ENCODE measurements at regions of chr11 and their contacts with region 1.

Region 1: DNA sequence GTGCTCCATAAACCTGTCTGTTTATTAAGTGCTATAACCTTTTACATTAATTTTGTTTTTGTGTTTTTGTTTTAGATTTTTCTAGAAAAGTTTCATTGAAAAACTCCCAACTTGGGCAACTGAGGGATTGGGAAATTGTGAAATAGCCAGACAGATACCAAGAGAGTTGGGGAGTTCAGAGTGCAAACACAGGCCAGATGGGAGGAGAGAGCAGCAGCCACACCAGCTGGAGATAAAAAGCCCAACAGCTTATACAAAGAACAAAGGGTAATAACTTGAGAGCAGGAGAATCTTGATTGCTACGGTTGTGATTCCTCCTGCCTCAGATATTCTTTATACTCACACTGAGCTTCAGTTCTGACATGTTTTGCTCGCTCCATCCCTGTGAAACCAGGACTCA is 1642.2 kb downstream of the LRRC4C start:
- DNase-seq: no peak
- H3K4me3 ChIP-seq: no peak overlapping the region
- H3K27ac ChIP-seq: no peak overlapping the region
- H3K4me1 ChIP-seq: no peaks in the 10 kb centered on the region
- H3K27me3 ChIP-seq: no peaks in the 10 kb centered on the region
- CTCF ChIP-seq: no peak
- POLR2A ChIP-seq: no peak

Region 2: DNA sequence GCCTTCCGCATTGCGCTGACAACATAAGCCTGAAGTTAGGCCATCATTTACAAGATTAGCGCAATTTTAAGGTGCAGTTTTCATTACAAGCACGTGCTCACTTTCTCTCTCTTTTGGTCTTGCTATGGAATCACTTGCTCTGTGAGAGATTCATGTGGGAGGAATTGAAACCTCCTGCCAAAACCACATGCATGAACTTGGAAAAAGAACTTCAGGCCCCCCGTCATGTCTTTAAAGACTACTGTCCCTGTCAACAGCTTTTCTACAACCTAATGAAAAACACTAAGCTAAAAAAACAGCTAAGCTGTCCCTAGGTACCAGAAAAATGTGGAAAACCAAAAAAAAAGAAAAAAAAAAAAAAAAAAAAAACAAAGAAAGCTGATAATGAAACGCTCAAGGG is 1511.6 kb before region 1 on chr11:
- intact Hi-C with region 1: no loop called
- DNase-seq: no peak
- H3K4me3 ChIP-seq: no peak overlapping the region
- H3K27ac ChIP-seq: no peak overlapping the region
- H3K4me1 ChIP-seq: no peaks in the 10 kb centered on the region
- H3K27me3 ChIP-seq: no peaks in the 10 kb centered on the region
- CTCF ChIP-seq: no peak
- POLR2A ChIP-seq: no peak

Region 3: GRCh38 chr11:39784873-39785272 is 32.4 kb before region 1 on chr11:
- intact Hi-C with region 1: loop called (anchors 1 kb)
- DNase-seq: no peak
- H3K4me3 ChIP-seq: no peak overlapping the region
- H3K27ac ChIP-seq: no peak overlapping the region
- H3K4me1 ChIP-seq: no peaks in the 10 kb centered on the region
- H3K27me3 ChIP-seq: no peaks in the 10 kb centered on the region
- CTCF ChIP-seq: no peak
- POLR2A ChIP-seq: no peak

Region 4: GRCh38 chr11:40029391-40029790 is 212.2 kb after region 1 on chr11:
- intact Hi-C with region 1: no loop called
- DNase-seq: no peak
- H3K4me3 ChIP-seq: no peak overlapping the region
- H3K27ac ChIP-seq: no peak overlapping the region
- H3K4me1 ChIP-seq: no peaks in the 10 kb centered on the region
- H3K27me3 ChIP-seq: no peaks in the 10 kb centered on the region
- CTCF ChIP-seq: no peak
- POLR2A ChIP-seq: no peak